ENCODE measurements at regions of chr21 and their contacts with region 1.

Region 1: DNA sequence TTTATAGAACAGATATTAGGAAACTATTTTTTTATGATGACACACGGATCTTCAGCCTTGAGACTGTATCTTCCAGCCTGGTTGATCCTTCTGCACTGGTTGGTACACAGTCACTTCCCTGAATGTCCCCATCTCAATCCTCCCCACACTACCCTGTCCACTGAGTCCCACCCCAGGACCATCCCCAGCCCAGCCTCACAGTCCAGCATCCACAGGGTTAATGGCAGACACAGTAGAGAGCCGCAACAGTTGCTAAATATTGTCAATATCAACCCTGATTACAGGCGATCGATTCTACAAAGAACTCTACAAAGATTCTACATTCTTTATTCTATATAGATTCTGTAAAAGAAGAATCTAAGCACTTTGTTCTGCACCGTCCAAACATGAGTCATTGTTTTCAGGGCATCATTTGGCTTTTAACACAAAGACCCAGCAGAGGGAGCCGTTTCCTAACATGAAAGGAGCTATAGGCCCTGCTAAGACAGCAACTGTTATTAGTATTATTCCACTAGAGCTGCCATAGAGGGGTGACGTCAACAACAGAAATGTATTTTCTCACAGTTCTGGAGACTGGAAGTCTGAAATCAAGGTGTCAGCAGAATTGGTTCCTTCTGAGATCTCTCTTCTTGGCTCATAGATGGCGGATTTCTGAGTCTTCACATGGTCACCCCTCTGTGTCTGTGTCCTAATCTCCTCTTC is 30.1 kb upstream of the IFNAR2 start:
- DNase-seq: peak; percentile 94
- H3K4me3 ChIP-seq: no peak overlapping the region
- H3K27ac ChIP-seq: peak overlapping the region; percentile 45
- H3K4me1 ChIP-seq: peaks cover 50% of the 10 kb centered on the region
- CTCF ChIP-seq: peak; percentile 97

Region 2: DNA sequence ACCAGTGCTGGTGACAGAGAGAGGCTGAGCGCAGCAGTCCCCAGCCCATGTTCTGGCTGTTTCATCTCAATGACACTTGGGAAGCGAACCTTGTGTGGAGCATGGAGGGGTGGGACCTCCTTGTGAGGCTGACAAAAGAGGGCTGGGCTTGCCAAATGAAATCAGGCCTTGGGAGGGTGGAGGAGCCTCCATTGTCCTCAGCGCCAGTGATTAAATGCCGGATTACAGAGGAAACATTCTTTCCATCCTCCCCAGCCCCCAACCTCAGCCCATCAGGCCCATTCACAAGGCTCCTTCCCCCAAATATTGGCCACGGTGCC is 364.8 kb before region 1 on chr21:
- CTCF ChIA-PET with region 1: no interaction called
- POLR2A ChIA-PET with region 1: no interaction called
- intact Hi-C with region 1: loop called (anchors 5 kb)
- DNase-seq: no peak
- H3K4me3 ChIP-seq: no peak overlapping the region
- H3K27ac ChIP-seq: no peak overlapping the region
- H3K4me1 ChIP-seq: no peaks in the 10 kb centered on the region
- CTCF ChIP-seq: no peak

Region 3: GRCh38 chr21:32940079-32941014 is 259.3 kb before region 1 on chr21:
- CTCF ChIA-PET with region 1: interaction called, 6 read pairs
- POLR2A ChIA-PET with region 1: no interaction called
- intact Hi-C with region 1: loop called (anchors 1 kb)
- DNase-seq: peak; percentile 60
- H3K4me3 ChIP-seq: no peak overlapping the region
- H3K27ac ChIP-seq: no peak overlapping the region
- H3K4me1 ChIP-seq: no peaks in the 10 kb centered on the region
- CTCF ChIP-seq: peak; percentile 89

Region 4: DNA sequence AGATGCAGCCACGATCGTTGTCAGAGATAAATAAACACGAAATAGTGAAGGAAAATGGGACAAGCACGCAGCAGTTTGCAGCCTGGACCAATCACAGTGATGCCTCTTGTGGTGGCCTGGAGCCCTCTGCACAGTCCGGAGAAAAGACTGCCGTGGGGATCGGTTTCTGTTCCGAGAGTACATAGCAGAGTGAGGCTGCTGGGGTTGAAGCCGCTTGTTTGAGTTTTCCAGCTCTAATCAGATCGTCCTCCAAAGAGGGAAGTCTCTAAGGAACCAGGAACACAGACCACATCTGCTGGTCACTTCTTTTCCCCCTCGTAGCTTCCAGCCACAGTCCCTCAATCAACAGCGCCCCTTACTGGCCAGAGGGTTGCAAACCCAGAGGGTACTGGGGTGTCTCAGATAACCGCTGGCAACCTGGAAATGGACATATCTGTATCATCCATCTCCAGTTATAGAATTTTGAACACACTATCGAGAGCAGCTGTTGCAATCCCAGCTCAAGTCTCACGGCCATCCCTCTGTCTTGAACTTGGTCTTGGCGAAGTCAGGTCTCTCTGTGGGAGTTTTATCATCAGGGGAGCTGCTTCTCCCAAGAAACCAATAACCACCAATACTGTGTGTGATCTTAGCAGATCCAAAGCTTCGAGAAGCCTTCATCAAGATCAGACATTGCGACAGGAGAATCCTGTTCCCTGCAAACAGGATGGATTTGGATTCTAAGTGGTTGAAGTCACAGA is 72.3 kb before region 1 on chr21:
- CTCF ChIA-PET with region 1: no interaction called
- POLR2A ChIA-PET with region 1: no interaction called
- intact Hi-C with region 1: loop called (anchors 2 kb)
- DNase-seq: peak; percentile 65
- H3K4me3 ChIP-seq: peak overlapping the region; percentile 44
- H3K27ac ChIP-seq: no peak overlapping the region
- H3K4me1 ChIP-seq: no peaks in the 10 kb centered on the region
- CTCF ChIP-seq: peak; percentile 94

Region 5: GRCh38 chr21:33247599-33247998 is 47.9 kb after region 1 on chr21:
- CTCF ChIA-PET with region 1: no interaction called
- POLR2A ChIA-PET with region 1: no interaction called
- intact Hi-C with region 1: no loop called
- DNase-seq: no peak
- H3K4me3 ChIP-seq: no peak overlapping the region
- H3K27ac ChIP-seq: no peak overlapping the region
- H3K4me1 ChIP-seq: no peaks in the 10 kb centered on the region
- CTCF ChIP-seq: no peak

Region 6: GRCh38 chr21:33360881-33361602 is 161.4 kb after region 1 on chr21:
- CTCF ChIA-PET with region 1: interaction called, 6 read pairs
- POLR2A ChIA-PET with region 1: interaction called, 7 read pairs
- intact Hi-C with region 1: loop called (anchors 2 kb)
- DNase-seq: peak; percentile 85
- H3K4me3 ChIP-seq: peak overlapping the region; percentile 38
- H3K27ac ChIP-seq: peak overlapping the region; percentile 73
- H3K4me1 ChIP-seq: peaks cover 38% of the 10 kb centered on the region
- CTCF ChIP-seq: peak; percentile 94

Region 7: DNA sequence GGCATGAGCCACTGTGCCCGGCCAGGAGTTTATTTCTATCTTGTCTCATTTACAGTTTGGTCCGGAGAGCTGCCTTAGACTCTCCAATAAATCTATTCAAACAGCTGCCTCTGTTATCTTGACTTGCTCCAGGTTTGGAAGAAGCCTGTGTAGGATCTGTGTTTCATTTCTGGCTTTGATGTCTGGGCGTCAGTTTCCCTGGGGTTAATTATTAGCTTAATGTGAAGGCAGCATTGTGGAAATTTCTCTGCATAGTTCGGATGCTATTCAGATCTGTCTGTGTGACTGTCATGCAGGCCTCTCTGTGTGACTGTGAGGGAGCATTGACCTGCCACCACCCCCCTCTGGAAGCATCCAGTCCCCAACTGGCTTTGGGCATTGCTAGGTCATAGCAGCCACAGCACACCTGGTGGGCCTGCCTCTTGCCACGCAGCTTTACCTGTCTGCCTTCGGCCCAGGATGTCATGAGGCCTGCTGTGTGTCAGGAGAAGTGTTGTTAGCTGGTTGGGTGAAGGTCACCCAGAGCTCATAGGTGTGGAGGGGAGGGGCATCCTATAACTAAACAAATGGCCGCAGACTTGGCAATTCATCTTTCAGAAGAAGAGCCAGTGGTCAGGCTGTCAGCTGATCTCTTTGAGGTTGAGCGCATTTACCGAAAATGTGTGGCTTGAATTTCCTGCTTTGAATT is 213.3 kb after region 1 on chr21:
- CTCF ChIA-PET with region 1: no interaction called
- POLR2A ChIA-PET with region 1: no interaction called
- intact Hi-C with region 1: no loop called
- DNase-seq: no peak
- H3K4me3 ChIP-seq: no peak overlapping the region
- H3K27ac ChIP-seq: no peak overlapping the region
- H3K4me1 ChIP-seq: peaks cover 10% of the 10 kb centered on the region
- CTCF ChIP-seq: no peak

Region 8: DNA sequence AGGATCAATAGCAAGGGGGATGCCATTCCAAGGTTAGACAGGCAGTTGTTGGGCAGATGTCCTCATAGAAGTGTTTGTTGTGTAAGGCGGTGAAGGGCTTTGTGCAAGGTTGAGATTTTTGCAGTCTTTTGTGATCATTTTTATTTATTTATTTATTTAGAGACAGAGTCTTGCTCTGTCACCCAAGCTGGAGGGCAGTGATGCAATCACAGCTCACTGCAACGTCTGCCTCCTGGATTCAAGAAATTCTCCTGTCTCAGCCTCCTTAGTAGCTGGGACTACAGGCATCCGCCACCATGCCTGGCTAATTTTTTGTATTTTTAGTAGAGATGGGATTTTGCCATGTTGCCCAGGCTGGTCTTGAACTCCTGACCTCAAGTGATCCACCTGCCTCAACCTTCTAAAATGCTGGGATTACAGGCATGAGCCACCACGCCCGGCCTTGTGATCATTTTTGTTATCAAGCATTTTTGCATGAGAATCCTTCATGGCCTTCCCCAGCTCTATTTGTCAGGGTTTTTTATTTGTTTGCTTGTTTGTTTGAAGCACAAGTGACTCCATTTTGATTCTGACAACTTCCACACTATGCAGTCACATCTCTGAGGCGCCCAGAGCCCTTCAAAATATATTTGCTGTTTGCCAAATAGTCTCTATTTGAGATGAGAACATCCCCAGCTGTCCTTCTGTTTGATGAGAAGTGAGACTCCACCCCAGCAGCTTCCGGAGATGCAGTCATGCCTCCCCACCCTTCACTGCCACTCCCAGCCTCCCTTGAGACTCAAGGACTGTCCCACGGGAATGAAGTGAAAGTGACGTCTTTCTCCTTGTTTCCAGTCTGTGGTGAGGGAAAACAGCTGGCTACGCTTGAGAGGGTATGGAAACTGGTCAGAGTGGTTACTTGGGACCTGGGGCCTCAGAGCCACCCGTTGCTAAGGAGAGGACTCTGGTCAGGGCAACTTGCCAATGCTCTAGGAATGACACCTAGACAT is 242.1 kb after region 1 on chr21:
- CTCF ChIA-PET with region 1: interaction called, 7 read pairs
- POLR2A ChIA-PET with region 1: interaction called, 3 read pairs
- intact Hi-C with region 1: loop called (anchors 1 kb)
- DNase-seq: peak; percentile 85
- H3K4me3 ChIP-seq: peak overlapping the region; percentile 5
- H3K27ac ChIP-seq: peak overlapping the region; percentile 69
- H3K4me1 ChIP-seq: peaks cover 61% of the 10 kb centered on the region
- CTCF ChIP-seq: no peak

Measured in OCI-LY7 (cell line).